PC-9 (cell line): ENCODE measurements at regions of chr15 and their contacts with region 1.

Region 1: GRCh38 chr15:51982013-51982769 is 10.6 kb upstream of the LEO1 start:
- DNase-seq: peak; percentile 53 to 71
- H3K4me3 ChIP-seq: peak overlapping the region; percentile 16; the same call in 1 of the 2 replicates
- H3K27ac ChIP-seq: peak overlapping the region; percentile 77
- H3K4me1 ChIP-seq: peaks cover 25% of the 10 kb centered on the region
- H3K27me3 ChIP-seq: no peaks in the 10 kb centered on the region
- CTCF ChIP-seq: peak; percentile 73

Region 2: DNA sequence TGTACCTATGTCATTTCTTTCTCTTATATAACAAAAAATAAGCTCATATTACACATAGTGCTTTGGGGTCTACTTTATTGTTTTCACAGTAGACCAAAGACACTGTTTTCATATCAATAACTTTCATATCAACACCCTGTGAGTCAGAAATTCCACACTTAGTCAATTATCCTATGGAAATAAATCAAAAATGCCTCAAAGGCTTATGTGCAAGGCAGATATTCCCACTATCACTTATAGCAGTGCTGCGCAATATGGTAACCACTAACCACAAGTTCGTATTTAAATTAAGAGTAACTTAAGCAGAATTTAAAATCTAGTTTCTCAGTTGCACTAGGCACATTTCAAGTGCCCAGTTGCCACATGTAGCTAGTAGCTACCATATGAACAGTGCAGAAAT is 285.0 kb before region 1 on chr15:
- CTCF ChIA-PET with region 1: no interaction called
- POLR2A ChIA-PET with region 1: no interaction called
- intact Hi-C with region 1: no loop called
- DNase-seq: no peak
- H3K4me3 ChIP-seq: no peak overlapping the region
- H3K27ac ChIP-seq: no peak overlapping the region
- H3K4me1 ChIP-seq: no peaks in the 10 kb centered on the region
- H3K27me3 ChIP-seq: peaks cover 9% of the 10 kb centered on the region; the same call in 1 of the 2 replicates
- CTCF ChIP-seq: no peak

Region 3: DNA sequence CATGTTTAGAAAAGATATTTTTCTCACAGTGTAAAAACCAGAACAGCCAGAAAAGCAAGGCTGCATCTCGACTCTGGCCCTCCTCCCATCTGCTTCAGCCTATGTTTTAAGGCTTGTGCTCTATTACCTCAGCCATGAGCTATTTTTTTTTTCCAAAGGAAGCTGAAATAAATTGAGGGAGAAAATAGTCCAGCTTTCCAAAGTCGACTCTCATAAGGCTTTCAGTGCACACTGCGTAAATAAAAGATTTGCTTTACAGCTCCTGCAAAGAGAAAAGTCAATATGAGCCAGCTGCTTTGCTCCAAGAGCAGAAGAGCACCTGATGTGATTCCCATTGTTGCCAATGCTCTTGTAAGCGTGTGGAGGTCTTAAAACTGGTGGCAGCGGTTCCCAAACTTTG is 274.2 kb before region 1 on chr15:
- CTCF ChIA-PET with region 1: no interaction called
- POLR2A ChIA-PET with region 1: no interaction called
- intact Hi-C with region 1: no loop called
- DNase-seq: no peak
- H3K4me3 ChIP-seq: no peak overlapping the region
- H3K27ac ChIP-seq: no peak overlapping the region
- H3K4me1 ChIP-seq: no peaks in the 10 kb centered on the region
- H3K27me3 ChIP-seq: no peaks in the 10 kb centered on the region
- CTCF ChIP-seq: no peak

Region 4: GRCh38 chr15:52018693-52019387 is 36.6 kb after region 1 on chr15 and contains the start of gene MAPK6:
- CTCF ChIA-PET with region 1: no interaction called
- POLR2A ChIA-PET with region 1: no interaction called
- intact Hi-C with region 1: loop called (anchors 5 kb)
- DNase-seq: peak; percentile 67 to 90
- H3K4me3 ChIP-seq: peak within 1 kb of the TSS; percentile 99
- H3K27ac ChIP-seq: peak within 1 kb of the TSS; percentile 83
- H3K4me1 ChIP-seq: peaks cover 16% of the 10 kb centered on the region
- H3K27me3 ChIP-seq: no peaks in the 10 kb centered on the region
- CTCF ChIP-seq: no peak
- total RNA-seq, gene MAPK6: 27.5 and 38.7 TPM in 2 replicates

Region 5: DNA sequence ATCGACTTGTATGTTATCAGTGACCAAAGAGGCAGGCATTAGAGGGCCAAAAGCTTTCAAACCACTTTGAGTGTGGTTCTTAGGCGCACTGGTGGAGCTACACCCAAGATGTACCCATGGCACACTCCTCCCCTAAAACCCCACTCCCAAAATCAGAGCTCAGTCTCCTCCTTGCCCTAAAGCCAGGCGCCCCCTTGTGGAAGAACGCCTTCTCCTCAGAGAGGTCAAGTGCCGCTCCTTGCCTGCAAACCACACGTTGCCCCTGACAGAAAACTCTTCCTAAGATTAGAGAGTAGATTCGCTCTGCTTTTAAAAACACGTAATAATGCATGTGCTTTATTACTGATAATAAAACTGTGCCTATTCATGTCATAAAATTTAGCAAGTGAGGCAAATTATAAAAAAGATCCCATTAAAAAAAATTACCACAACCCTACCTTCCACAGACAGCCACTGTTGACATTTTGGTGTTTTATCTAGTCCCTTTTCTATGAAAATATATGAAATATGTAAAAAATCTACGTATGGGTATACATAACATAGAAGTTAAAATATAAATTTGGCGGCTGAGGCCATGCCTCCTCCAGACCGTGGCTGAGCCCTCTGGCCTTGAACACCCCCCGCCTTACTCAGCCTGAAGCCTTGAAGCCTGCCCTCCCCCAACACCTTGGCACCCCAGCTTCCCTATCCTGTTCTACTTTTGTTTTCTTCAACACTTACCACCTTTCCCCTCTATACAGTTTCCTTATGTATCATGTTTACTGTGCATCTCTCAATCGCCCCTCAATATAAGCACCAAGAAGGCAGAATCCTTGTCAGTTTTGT is 96.9 kb after region 1 on chr15:
- CTCF ChIA-PET with region 1: interaction called, 3 read pairs
- POLR2A ChIA-PET with region 1: interaction called, 6 read pairs
- intact Hi-C with region 1: loop called (anchors 1 kb)
- DNase-seq: peak in 1 of 2 experiments; percentile 60
- H3K4me3 ChIP-seq: no peak overlapping the region
- H3K27ac ChIP-seq: no peak overlapping the region
- H3K4me1 ChIP-seq: peaks cover 9% of the 10 kb centered on the region; the same call in 1 of the 2 replicates
- H3K27me3 ChIP-seq: no peaks in the 10 kb centered on the region
- CTCF ChIP-seq: peak; percentile 78

Region 6: GRCh38 chr15:52124270-52124880 is 142.2 kb after region 1 on chr15:
- CTCF ChIA-PET with region 1: interaction called, 15 read pairs
- POLR2A ChIA-PET with region 1: no interaction called
- intact Hi-C with region 1: no loop called
- DNase-seq: peak; percentile 9 to 55
- H3K4me3 ChIP-seq: no peak overlapping the region
- H3K27ac ChIP-seq: peak overlapping the region; percentile 47
- H3K4me1 ChIP-seq: peaks cover 17% of the 10 kb centered on the region
- H3K27me3 ChIP-seq: no peaks in the 10 kb centered on the region
- CTCF ChIP-seq: no peak

Region 7: DNA sequence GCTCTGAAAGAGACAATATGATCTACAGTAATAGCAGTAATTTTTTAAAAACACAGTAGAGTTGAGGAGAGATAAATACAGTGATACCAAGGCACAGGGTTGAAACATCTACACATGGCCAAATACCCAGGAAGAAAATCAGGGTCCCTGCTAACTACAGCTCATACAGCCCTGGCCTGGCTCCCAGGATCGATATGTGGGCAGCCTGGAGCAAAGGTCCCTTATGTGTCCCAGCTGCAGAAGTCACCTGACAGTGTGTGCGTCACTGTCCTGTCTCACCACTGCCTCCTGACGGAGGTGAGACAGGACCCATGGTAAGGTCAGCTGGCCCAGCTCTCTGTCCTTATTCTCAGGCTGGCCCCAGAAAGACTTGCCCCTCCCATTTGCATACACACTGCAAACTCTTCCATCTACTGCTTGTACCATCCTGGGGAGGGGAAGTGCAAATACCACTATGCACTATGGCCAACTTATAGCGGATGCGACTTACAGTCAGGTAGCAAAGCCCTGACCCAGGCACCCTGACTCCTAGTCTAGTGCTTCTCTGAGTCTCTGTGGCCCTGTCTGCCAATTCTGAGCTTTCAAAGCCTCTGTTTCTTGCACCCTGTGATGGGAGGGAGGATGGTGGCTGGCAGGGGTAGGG is 152.4 kb after region 1 on chr15:
- CTCF ChIA-PET with region 1: no interaction called
- POLR2A ChIA-PET with region 1: no interaction called
- intact Hi-C with region 1: no loop called
- DNase-seq: no peak
- H3K4me3 ChIP-seq: no peak overlapping the region
- H3K27ac ChIP-seq: no peak overlapping the region
- H3K4me1 ChIP-seq: peaks cover 3% of the 10 kb centered on the region; the same call in 1 of the 2 replicates
- H3K27me3 ChIP-seq: no peaks in the 10 kb centered on the region
- CTCF ChIP-seq: no peak

Region 8: GRCh38 chr15:52208306-52208946 is 226.2 kb after region 1 on chr15:
- CTCF ChIA-PET with region 1: no interaction called
- POLR2A ChIA-PET with region 1: no interaction called
- intact Hi-C with region 1: loop called (anchors 5 kb)
- DNase-seq: peak; percentile 36 to 55
- H3K4me3 ChIP-seq: no peak overlapping the region
- H3K27ac ChIP-seq: no peak overlapping the region
- H3K4me1 ChIP-seq: no peaks in the 10 kb centered on the region
- H3K27me3 ChIP-seq: no peaks in the 10 kb centered on the region
- CTCF ChIP-seq: peak; percentile 81

Region 9: GRCh38 chr15:52805351-52806283 is 823.4 kb after region 1 on chr15:
- CTCF ChIA-PET with region 1: no interaction called
- POLR2A ChIA-PET with region 1: no interaction called
- intact Hi-C with region 1: no loop called
- DNase-seq: no peak
- H3K4me3 ChIP-seq: no peak overlapping the region
- H3K27ac ChIP-seq: no peak overlapping the region
- H3K4me1 ChIP-seq: no peaks in the 10 kb centered on the region
- H3K27me3 ChIP-seq: peaks cover 22% of the 10 kb centered on the region
- CTCF ChIP-seq: no peak